Left ventricle myocardium superior (tissue), 1 donor: ENCODE measurements at regions of chr5 and their contacts with region 1.

Region 1: GRCh38 chr5:173907686-173908371 is 19.7 kb downstream of the CPEB4 start:
- DNase-seq: no peak
- ATAC-seq: peak; percentile 46

Region 2: GRCh38 chr5:173954671-173955521 is 47.1 kb after region 1 on chr5:
- intact Hi-C with region 1: loop called (anchors 10 kb)
- DNase-seq: no peak
- ATAC-seq: peak; percentile 88